CD8-positive, alpha-beta T cell (primary cell): ENCODE measurements at regions of chr10 and their contacts with region 1.

Region 1: GRCh38 chr10:68901104-68901927 is at the start of gene DDX50:
- DNase-seq: peak; percentile 88 to 99 (median 95)
- ATAC-seq: peak; percentile 95
- H3K4me3 ChIP-seq: peak within 1 kb of the TSS; percentile 87 to 90
- H3K4me3 Mint-ChIP-seq: peak within 1 kb of the TSS; percentile 98
- H3K27ac ChIP-seq: peak within 1 kb of the TSS; percentile 95 to 97
- H3K27ac Mint-ChIP-seq: peak within 1 kb of the TSS; percentile 99
- H3K4me1 ChIP-seq: peaks cover 24% of the 10 kb centered on the region
- H3K4me1 Mint-ChIP-seq: peaks cover 41% of the 10 kb centered on the region
- H3K27me3 ChIP-seq: no peaks in the 10 kb centered on the region
- H3K27me3 Mint-ChIP-seq: no peaks in the 10 kb centered on the region
- CTCF ChIP-seq: no peak
- total RNA-seq, gene DDX50: 49.4 to 56.3 TPM

Region 2: GRCh38 chr10:67764012-67764822 is 1137.1 kb before region 1 on chr10:
- CTCF ChIA-PET with region 1: no interaction called
- POLR2A ChIA-PET with region 1: no interaction called
- intact Hi-C with region 1: loop called in 1 of 2 experiments (anchors 5 kb)
- DNase-seq: peak; percentile 96 to 100 (median 97)
- ATAC-seq: peak; percentile 80
- H3K4me3 ChIP-seq: peak overlapping the region; percentile 83 to 92
- H3K4me3 Mint-ChIP-seq: peak overlapping the region; percentile 92
- H3K27ac ChIP-seq: peak overlapping the region; percentile 84 to 89
- H3K27ac Mint-ChIP-seq: peak overlapping the region; percentile 97
- H3K4me1 ChIP-seq: no peaks in the 10 kb centered on the region
- H3K4me1 Mint-ChIP-seq: peaks cover 8% of the 10 kb centered on the region
- H3K27me3 ChIP-seq: no peaks in the 10 kb centered on the region
- H3K27me3 Mint-ChIP-seq: peaks cover 2% of the 10 kb centered on the region
- CTCF ChIP-seq: no peak

Region 3: DNA sequence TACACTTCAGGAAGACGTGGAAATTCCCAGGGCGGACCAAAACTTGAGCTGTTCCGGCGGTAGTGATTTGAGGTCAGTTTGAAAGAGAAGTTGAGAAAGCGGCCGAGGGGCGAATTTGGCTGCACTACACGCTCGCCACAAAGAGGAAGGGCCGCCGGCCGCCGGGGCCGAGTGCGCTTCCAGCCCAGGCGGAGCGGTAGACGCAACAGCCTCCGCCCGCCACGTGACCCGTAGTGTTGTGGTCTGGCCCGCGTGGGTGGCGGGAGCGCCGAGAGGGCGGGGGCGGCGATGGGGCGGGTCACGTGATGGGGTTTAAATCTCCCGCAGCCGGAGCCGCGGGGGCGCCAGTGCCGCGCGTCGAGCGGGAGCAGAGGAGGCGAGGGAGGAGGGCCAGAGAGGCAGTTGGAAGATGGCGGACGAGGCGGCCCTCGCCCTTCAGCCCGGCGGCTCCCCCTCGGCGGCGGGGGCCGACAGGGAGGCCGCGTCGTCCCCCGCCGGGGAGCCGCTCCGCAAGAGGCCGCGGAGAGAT is 1016.9 kb before region 1 on chr10 and contains the start of gene SIRT1:
- CTCF ChIA-PET with region 1: no interaction called
- POLR2A ChIA-PET with region 1: no interaction called
- intact Hi-C with region 1: loop called (anchors 10 kb)
- DNase-seq: peak; percentile 84 to 97 (median 94)
- ATAC-seq: peak; percentile 72
- H3K4me3 ChIP-seq: peak within 1 kb of the TSS; percentile 69 to 70
- H3K4me3 Mint-ChIP-seq: peak within 1 kb of the TSS; percentile 89
- H3K27ac ChIP-seq: peak within 1 kb of the TSS; percentile 57 to 89
- H3K27ac Mint-ChIP-seq: peak within 1 kb of the TSS; percentile 94
- H3K4me1 ChIP-seq: peaks cover 23% of the 10 kb centered on the region
- H3K4me1 Mint-ChIP-seq: peaks cover 35% of the 10 kb centered on the region
- H3K27me3 ChIP-seq: no peaks in the 10 kb centered on the region
- H3K27me3 Mint-ChIP-seq: no peaks in the 10 kb centered on the region
- CTCF ChIP-seq: no peak
- total RNA-seq, gene SIRT1: 72.6 to 74.5 TPM

Region 4: DNA sequence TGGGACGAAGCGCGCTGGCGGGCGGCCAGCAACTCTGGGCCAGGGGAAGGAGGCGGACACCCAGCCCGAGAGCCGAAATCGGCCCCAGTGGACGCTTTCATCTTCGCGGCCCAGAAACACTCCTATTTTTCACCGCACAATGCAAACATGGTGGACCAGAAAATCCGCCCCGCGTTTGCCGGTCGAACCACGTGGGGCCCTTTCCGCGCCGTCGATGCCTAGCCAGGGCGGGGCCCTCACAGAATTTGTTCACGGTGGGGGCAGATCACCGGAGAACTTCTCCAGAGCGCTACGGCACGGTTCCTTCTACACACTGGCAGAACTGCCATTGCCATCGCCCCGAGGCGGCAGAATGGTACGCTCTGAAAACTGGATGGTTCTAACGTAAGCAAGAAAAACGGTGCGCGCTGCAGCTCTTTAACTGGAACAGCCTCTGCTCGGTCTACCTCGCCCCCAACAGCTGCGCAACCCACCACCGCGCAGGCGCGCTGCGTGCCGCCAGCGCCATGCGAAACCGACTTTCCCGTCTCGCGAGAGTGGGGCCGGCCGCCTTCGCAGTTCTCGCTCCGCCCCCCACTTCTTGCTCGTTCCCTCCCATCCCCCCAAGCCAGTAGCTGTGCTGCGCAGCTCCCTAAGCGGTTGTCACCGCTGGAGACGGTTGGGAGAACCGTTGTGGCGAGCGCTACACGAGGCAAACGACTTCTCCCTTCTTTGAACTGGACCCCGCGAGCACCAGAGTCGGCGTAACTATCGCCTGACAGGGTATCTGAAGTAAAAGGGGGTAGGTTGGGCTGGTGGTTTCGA is 569.7 kb before region 1 on chr10 and contains the start of gene HNRNPH3:
- CTCF ChIA-PET with region 1: no interaction called
- POLR2A ChIA-PET with region 1: interaction called, 4 read pairs
- intact Hi-C with region 1: loop called (anchors 1 to 5 kb)
- DNase-seq: peak; percentile 98 to 100 (median 99)
- ATAC-seq: peak; percentile 82
- H3K4me3 ChIP-seq: peak within 1 kb of the TSS; percentile 75 to 83
- H3K4me3 Mint-ChIP-seq: peak within 1 kb of the TSS; percentile 100
- H3K27ac ChIP-seq: peak within 1 kb of the TSS; percentile 86 to 99
- H3K27ac Mint-ChIP-seq: peak within 1 kb of the TSS; percentile 100
- H3K4me1 ChIP-seq: peaks cover 28% of the 10 kb centered on the region
- H3K4me1 Mint-ChIP-seq: peaks cover 44% of the 10 kb centered on the region
- H3K27me3 ChIP-seq: no peaks in the 10 kb centered on the region
- H3K27me3 Mint-ChIP-seq: no peaks in the 10 kb centered on the region
- CTCF ChIP-seq: no peak
- total RNA-seq, gene HNRNPH3: 242 to 255 TPM

Region 5: DNA sequence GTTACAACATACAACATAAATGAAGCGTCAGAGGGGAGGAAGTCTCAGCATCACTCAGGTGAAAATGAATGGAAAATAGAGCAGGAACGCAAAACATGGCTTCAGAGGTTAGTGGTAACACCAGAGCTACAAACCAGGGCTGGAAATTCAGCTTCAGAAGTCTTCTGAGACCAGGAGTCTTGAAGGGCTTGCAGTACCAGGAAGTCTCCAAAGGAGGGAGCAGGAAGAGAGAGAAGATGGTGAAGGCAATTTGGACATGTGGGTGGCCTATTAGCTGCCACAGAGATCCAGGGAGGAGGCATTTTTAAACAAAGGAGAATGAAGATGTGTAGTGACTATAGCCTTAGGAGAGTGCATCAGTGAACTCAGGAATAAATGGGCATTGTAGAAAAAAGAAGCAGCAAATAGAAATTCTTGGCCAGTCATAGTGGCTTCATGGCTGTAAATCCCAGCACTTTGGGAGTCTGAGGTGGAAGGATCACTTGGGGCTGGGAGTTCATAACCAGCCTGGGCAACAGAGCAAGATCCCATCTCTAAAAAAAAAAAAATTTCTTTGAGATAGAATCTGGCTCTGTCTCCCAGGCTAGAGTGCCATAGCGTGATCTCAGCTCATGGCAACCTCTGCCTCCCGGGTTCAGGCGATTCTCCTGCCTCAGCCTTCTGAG is 350.4 kb before region 1 on chr10:
- CTCF ChIA-PET with region 1: interaction called, 15 read pairs
- POLR2A ChIA-PET with region 1: no interaction called
- intact Hi-C with region 1: loop called (anchors 2 to 5 kb)
- DNase-seq: peak in 8 of 9 experiments; percentile 14 to 72 (median 33)
- ATAC-seq: peak; percentile 88
- H3K4me3 ChIP-seq: no peak overlapping the region
- H3K4me3 Mint-ChIP-seq: no peak overlapping the region
- H3K27ac ChIP-seq: no peak overlapping the region
- H3K27ac Mint-ChIP-seq: no peak overlapping the region
- H3K4me1 ChIP-seq: no peaks in the 10 kb centered on the region
- H3K4me1 Mint-ChIP-seq: no peaks in the 10 kb centered on the region
- H3K27me3 ChIP-seq: no peaks in the 10 kb centered on the region
- H3K27me3 Mint-ChIP-seq: no peaks in the 10 kb centered on the region
- CTCF ChIP-seq: peak; percentile 66

Region 6: GRCh38 chr10:68955832-68956532 is 54.7 kb after region 1 on chr10 and contains the start of gene DDX21:
- CTCF ChIA-PET with region 1: no interaction called
- POLR2A ChIA-PET with region 1: interaction called, 15 read pairs
- intact Hi-C with region 1: loop called (anchors 1 kb)
- DNase-seq: peak; percentile 68 to 95 (median 89)
- ATAC-seq: peak; percentile 75
- H3K4me3 ChIP-seq: peak within 1 kb of the TSS; percentile 85 to 96
- H3K4me3 Mint-ChIP-seq: peak within 1 kb of the TSS; percentile 100
- H3K27ac ChIP-seq: peak within 1 kb of the TSS; percentile 95 to 99
- H3K27ac Mint-ChIP-seq: peak within 1 kb of the TSS; percentile 100
- H3K4me1 ChIP-seq: peaks cover 21% of the 10 kb centered on the region
- H3K4me1 Mint-ChIP-seq: peaks cover 41% of the 10 kb centered on the region
- H3K27me3 ChIP-seq: no peaks in the 10 kb centered on the region
- H3K27me3 Mint-ChIP-seq: no peaks in the 10 kb centered on the region
- CTCF ChIP-seq: peak; percentile 71
- total RNA-seq, gene DDX21: 175 to 185 TPM

Region 7: GRCh38 chr10:69179743-69180524 is 278.6 kb after region 1 on chr10 and contains the start of gene SUPV3L1:
- CTCF ChIA-PET with region 1: no interaction called
- POLR2A ChIA-PET with region 1: no interaction called
- intact Hi-C with region 1: loop called (anchors 2 kb)
- DNase-seq: peak; percentile 71 to 96 (median 87)
- ATAC-seq: peak; percentile 70
- H3K4me3 ChIP-seq: peak within 1 kb of the TSS; percentile 88 to 90
- H3K4me3 Mint-ChIP-seq: peak within 1 kb of the TSS; percentile 91
- H3K27ac ChIP-seq: peak within 1 kb of the TSS; percentile 97 to 98
- H3K27ac Mint-ChIP-seq: peak within 1 kb of the TSS; percentile 99
- H3K4me1 ChIP-seq: peaks cover 24% of the 10 kb centered on the region
- H3K4me1 Mint-ChIP-seq: peaks cover 41% of the 10 kb centered on the region
- H3K27me3 ChIP-seq: no peaks in the 10 kb centered on the region
- H3K27me3 Mint-ChIP-seq: no peaks in the 10 kb centered on the region
- CTCF ChIP-seq: no peak
- total RNA-seq, gene SUPV3L1: 89.3 to 99.6 TPM